GM13976 (cell line): ENCODE measurements at regions of chr15 and their contacts with region 1.

Region 1: DNA sequence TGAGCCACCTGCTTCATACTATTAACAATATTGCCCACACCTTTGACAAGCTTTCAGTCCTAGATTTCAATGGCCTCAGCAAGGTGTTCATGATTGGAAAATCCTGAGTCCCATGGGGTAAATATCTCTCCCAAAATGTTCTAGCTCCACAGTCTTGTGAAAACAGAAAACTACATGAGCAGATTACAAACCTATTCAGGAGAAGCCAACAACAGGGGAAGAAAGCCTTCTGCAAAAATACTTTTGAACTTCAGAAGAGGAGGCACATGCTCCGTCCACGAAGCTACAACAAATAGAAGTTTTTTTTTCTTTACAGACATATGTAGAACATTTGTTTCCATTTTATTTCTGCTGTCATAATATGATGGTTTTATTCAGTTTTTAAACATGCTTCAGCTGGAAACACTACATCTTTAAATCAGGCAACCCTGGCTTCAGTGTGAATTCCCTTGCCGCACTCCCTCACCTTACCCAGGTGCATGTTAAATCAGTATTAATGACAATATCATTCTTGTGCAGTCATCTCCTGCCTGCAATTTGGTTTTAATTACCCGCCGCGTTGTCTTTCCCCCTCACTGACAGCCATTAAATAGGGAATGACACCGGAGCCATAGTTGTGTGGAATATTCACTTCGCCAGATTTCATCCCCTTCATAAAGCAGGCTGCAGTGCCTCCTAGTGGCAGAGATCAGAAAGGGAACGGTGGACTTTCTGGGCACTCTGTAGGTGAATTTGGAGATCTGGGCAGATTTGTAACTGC is 725.5 kb upstream of the ARRDC4 start:
- DNase-seq: peak; percentile 34
- CTCF ChIP-seq: peak; percentile 42

Region 2: GRCh38 chr15:96356494-96357455 is 878.3 kb before region 1 on chr15:
- in situ Hi-C with region 1: loop called (anchors 25 kb)
- DNase-seq: peak; percentile 82
- CTCF ChIP-seq: peak; percentile 87